Sciatic nerve (tissue), 2 donors: ENCODE measurements at regions of chr11 and their contacts with region 1.

Region 1: DNA sequence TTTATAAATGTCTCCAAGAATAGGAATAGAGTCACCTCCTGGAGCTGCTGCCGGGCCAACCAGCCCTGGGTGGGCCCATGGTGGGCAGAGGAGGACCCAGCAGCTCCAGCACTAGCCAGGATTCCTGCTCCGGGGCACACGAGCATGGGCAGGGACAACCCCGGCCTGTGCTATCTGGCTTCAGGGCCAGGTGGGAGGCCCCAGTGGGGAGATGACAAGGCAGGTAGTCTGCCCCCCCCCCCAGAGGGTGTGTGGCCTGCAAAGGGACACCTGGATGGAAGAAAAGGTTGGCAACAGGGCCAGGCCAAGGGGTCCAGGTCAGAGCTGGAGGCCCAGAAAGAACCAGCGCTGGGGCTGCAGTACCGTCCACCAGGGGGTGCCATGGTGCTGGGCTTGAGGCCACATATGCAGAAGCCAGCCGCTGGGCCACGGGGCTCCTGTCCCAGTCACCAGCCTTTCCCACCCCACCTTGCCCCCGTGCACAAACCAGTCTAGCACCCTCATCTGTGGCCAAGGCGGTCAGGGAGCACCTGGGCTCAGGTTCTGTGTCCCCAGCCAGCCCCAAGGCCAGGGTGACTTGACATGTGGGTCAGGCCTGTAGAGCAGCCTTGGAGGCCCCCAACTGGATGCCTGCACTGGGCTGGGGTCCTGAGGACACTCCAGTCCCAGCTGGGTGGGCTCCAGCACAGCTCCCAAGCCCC is 3.5 kb downstream of the TSPAN32 start:
- DNase-seq: peak; percentile 96
- ATAC-seq: peak; percentile 70

Region 2: GRCh38 chr11:2377511-2378443 is 72.5 kb after region 1 on chr11:
- intact Hi-C with region 1: loop called (anchors 5 kb)
- DNase-seq: peak; percentile 85
- ATAC-seq: peak; percentile 76

Region 3: GRCh38 chr11:2420502-2421225 is 115.4 kb after region 1 on chr11:
- intact Hi-C with region 1: loop called (anchors 2 kb)
- DNase-seq: peak; percentile 87
- ATAC-seq: peak; percentile 96

Region 4: GRCh38 chr11:2860636-2861035 is 555.3 kb after region 1 on chr11:
- intact Hi-C with region 1: no loop called
- DNase-seq: no peak
- ATAC-seq: peak; percentile 13

Region 5: DNA sequence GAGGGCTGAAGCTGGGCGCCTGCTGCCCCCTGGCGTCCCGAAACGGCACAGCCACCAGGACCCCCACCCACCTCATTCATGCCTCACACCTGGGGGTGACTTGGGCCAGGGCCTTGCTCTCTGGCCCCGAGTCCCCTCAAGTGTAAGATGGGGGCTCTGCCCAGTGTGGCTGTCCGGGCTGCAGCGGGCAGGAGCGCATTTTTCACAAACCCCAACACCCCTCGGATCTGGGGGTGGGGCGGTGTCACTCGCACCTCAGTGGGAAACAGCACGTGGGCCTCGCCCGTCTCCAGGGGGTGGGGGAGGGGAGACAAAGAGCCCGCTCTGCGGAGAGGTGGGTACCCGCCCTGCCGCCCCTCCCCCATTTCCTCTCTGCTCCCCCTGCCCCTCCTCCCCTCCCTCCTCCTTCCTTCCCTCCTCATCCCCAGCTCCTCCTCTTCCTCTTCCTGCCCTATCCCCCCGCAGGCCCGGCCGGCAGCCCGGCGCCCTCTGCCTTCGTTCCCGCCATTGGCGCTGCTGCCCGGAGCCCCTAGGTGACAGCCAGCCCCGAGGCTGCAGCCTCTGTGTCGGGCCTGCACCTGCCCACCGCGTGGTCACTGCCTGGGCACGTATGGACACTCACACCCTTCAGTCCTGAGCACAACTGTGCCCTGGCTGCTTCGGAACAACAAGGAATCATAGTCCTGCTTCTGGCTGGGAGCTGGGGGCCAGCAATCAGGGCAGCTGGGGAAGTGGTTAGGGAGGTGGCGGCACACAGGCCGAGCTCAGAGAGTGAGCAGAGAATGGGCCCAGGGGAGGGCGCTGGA is 587.1 kb after region 1 on chr11:
- intact Hi-C with region 1: loop called (anchors 10 kb)
- DNase-seq: peak; percentile 86
- ATAC-seq: peak; percentile 67